ENCODE measurements at regions of chr7 and their contacts with region 1.

Region 1: DNA sequence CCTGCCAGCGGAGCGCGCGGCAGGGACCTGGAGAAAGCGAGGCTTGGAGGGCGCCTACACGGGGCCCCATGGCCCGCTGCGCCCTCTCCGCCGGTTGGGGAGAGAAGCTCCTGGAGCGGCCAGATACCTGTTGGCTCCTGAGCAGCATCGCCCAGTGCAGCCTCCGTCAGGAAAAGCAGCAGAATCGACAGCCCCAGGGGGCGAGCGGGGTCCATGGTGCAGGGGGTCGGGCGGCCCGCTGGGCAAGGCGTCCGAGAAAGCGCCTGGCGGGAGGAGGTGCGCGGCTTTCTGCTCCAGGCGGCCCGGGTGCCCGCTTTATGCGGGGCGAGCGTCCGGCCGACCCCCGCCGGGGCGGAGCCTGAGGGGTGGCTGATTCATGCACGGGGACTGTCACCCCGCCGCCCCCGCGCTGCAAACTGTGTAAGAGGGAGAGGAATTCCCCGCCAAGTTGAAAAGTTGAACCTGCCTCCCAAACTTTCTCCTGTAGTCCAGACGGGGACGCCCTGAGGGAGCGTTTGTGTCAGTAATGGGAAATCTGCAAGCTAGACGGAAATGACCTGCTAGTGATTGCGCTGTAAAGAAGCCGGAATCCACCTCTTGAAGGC is at the start of gene TFPI2:
- DNase-seq: peak; percentile 89 to 94
- H3K4me3 ChIP-seq: peak within 1 kb of the TSS; percentile 91
- H3K27ac ChIP-seq: peak within 1 kb of the TSS; percentile 68
- H3K4me1 ChIP-seq: peaks cover 17% of the 10 kb centered on the region
- H3K27me3 ChIP-seq: no peaks in the 10 kb centered on the region
- CTCF ChIP-seq: 0 out of 2 replicates have a peak, but pooled peaks have one; percentile 0
- total RNA-seq, gene TFPI2: 67.3 and 86.1 TPM in 2 replicates

Region 2: GRCh38 chr7:93747019-93747418 is 143.5 kb before region 1 on chr7:
- CTCF ChIA-PET with region 1: no interaction called
- POLR2A ChIA-PET with region 1: no interaction called
- intact Hi-C with region 1: no loop called
- DNase-seq: no peak
- H3K4me3 ChIP-seq: no peak overlapping the region
- H3K27ac ChIP-seq: no peak overlapping the region
- H3K4me1 ChIP-seq: no peaks in the 10 kb centered on the region
- H3K27me3 ChIP-seq: no peaks in the 10 kb centered on the region
- CTCF ChIP-seq: no peak

Region 3: GRCh38 chr7:93856323-93856722 is 34.2 kb before region 1 on chr7:
- CTCF ChIA-PET with region 1: no interaction called
- POLR2A ChIA-PET with region 1: no interaction called
- intact Hi-C with region 1: no loop called
- DNase-seq: no peak
- H3K4me3 ChIP-seq: no peak overlapping the region
- H3K27ac ChIP-seq: no peak overlapping the region
- H3K4me1 ChIP-seq: peaks cover 10% of the 10 kb centered on the region; the same call in 1 of the 2 replicates
- H3K27me3 ChIP-seq: no peaks in the 10 kb centered on the region
- CTCF ChIP-seq: no peak

Region 4: DNA sequence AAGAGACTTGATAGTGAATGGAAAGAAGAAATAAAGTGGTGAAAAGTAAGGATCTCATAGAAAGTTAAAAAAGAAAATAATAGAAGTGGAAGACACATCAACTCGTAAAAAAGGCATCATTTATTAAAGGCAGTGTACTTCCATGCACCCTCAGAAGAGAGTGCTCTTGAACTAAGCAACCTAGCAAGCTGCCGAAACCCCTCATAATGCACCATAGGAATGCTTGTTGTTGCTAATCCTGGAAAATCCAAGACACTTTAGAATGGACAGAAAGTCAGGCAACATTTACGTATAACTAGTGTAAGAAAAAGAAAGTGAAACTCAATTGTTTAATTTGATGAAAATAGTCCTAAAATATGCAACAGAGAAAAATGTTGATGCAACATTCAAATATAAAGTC is 12.8 kb before region 1 on chr7:
- CTCF ChIA-PET with region 1: no interaction called
- POLR2A ChIA-PET with region 1: no interaction called
- intact Hi-C with region 1: no loop called
- DNase-seq: no peak
- H3K4me3 ChIP-seq: no peak overlapping the region
- H3K27ac ChIP-seq: no peak overlapping the region
- H3K4me1 ChIP-seq: no peaks in the 10 kb centered on the region
- H3K27me3 ChIP-seq: no peaks in the 10 kb centered on the region
- CTCF ChIP-seq: no peak

Region 5: GRCh38 chr7:93914325-93915081 is 23.9 kb after region 1 on chr7:
- CTCF ChIA-PET with region 1: interaction called, 3 read pairs
- POLR2A ChIA-PET with region 1: interaction called, 4 read pairs
- intact Hi-C with region 1: loop called (anchors 1 kb)
- DNase-seq: peak; percentile 70 to 90
- H3K4me3 ChIP-seq: peak overlapping the region; percentile 36; the same call in 1 of the 2 replicates
- H3K27ac ChIP-seq: peak overlapping the region; percentile 98
- H3K4me1 ChIP-seq: peaks cover 15% of the 10 kb centered on the region
- H3K27me3 ChIP-seq: no peaks in the 10 kb centered on the region
- CTCF ChIP-seq: no peak

Region 6: GRCh38 chr7:94087664-94088352 is 197.2 kb after region 1 on chr7:
- CTCF ChIA-PET with region 1: interaction called, 3 read pairs
- POLR2A ChIA-PET with region 1: no interaction called
- intact Hi-C with region 1: loop called (anchors 1 kb)
- DNase-seq: peak; percentile 57 to 62
- H3K4me3 ChIP-seq: no peak overlapping the region
- H3K27ac ChIP-seq: no peak overlapping the region
- H3K4me1 ChIP-seq: no peaks in the 10 kb centered on the region
- H3K27me3 ChIP-seq: no peaks in the 10 kb centered on the region
- CTCF ChIP-seq: peak; percentile 80

Region 7: DNA sequence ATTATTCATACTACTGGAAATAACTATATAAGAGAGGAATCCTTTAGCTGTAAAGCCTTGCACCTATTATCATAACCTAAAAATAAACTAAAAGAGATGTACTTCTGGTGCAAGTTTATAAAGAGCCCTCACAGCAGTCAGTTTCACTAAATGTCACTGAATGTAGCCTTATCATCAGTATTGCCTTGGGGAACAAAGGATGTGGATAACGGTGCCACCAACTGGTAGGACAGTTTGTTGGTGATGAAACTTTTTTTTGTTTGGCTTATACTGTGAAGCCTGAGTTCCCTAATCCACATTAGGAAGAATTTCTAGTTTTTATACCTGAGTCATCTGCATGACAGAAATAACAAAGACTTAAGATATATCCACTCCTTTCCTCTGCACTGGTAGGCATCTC is 386.2 kb after region 1 on chr7:
- CTCF ChIA-PET with region 1: no interaction called
- POLR2A ChIA-PET with region 1: no interaction called
- intact Hi-C with region 1: loop called (anchors 10 kb)
- DNase-seq: peak in 1 of 2 experiments; percentile 12
- H3K4me3 ChIP-seq: no peak overlapping the region
- H3K27ac ChIP-seq: no peak overlapping the region
- H3K4me1 ChIP-seq: no peaks in the 10 kb centered on the region
- H3K27me3 ChIP-seq: no peaks in the 10 kb centered on the region
- CTCF ChIP-seq: peak; percentile 49